Endothelial cell of umbilical vein (primary cell): ENCODE measurements at regions of chr11 and their contacts with region 1.

Region 1: GRCh38 chr11:17978553-17979287 is 34.1 kb downstream of the SERGEF start:
- DNase-seq: peak; percentile 41
- H3K4me3 ChIP-seq: no peak overlapping the region
- H3K27ac ChIP-seq: no peak overlapping the region
- H3K4me1 ChIP-seq: no peaks in the 10 kb centered on the region
- H3K27me3 ChIP-seq: no peaks in the 10 kb centered on the region
- CTCF ChIP-seq: peak; percentile 64 to 87
- POLR2A ChIP-seq: no peak

Region 2: GRCh38 chr11:17598700-17599459 is 379.8 kb before region 1 on chr11:
- CTCF ChIA-PET with region 1: interaction called, 58 read pairs
- POLR2A ChIA-PET with region 1: no interaction called
- dilution Hi-C with region 1: no loop called
- intact Hi-C with region 1: loop called (anchors 1 kb)
- DNase-seq: peak; percentile 61
- H3K4me3 ChIP-seq: no peak overlapping the region
- H3K27ac ChIP-seq: no peak overlapping the region
- H3K4me1 ChIP-seq: no peaks in the 10 kb centered on the region
- H3K27me3 ChIP-seq: no peaks in the 10 kb centered on the region
- CTCF ChIP-seq: peak; percentile 86 to 98
- POLR2A ChIP-seq: no peak

Region 3: GRCh38 chr11:17760102-17761029 is 218.4 kb before region 1 on chr11:
- CTCF ChIA-PET with region 1: interaction called, 74 read pairs
- POLR2A ChIA-PET with region 1: no interaction called
- dilution Hi-C with region 1: no loop called
- intact Hi-C with region 1: loop called (anchors 1 kb)
- DNase-seq: peak; percentile 49
- H3K4me3 ChIP-seq: no peak overlapping the region
- H3K27ac ChIP-seq: no peak overlapping the region
- H3K4me1 ChIP-seq: no peaks in the 10 kb centered on the region
- H3K27me3 ChIP-seq: no peaks in the 10 kb centered on the region
- CTCF ChIP-seq: peak; percentile 41 to 73
- POLR2A ChIP-seq: no peak

Region 4: GRCh38 chr11:17770048-17770652 is 208.6 kb before region 1 on chr11:
- CTCF ChIA-PET with region 1: interaction called, 16 read pairs
- POLR2A ChIA-PET with region 1: no interaction called
- dilution Hi-C with region 1: no loop called
- intact Hi-C with region 1: no loop called
- DNase-seq: no peak
- H3K4me3 ChIP-seq: no peak overlapping the region
- H3K27ac ChIP-seq: no peak overlapping the region
- H3K4me1 ChIP-seq: no peaks in the 10 kb centered on the region
- H3K27me3 ChIP-seq: no peaks in the 10 kb centered on the region
- CTCF ChIP-seq: no peak
- POLR2A ChIP-seq: no peak

Region 5: DNA sequence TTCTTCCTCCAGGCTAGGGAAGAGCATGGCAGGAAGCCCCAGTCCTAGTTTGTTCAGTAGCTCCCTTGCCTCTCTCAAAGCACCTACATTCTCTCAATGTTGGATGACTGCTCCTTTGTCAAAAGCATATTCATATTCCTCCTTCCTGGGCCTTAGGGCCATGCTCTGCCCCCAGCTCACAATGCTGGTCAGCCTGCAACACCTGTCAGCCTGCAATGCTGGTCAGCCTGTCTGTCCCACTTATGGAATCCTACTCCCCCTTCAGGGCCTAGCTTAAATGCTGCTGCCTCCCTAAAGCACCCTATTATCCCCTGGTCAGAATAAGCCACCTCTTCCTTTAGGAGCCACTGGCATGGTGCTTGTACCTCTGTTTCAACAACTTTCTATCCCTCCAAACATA is 11.1 kb before region 1 on chr11:
- CTCF ChIA-PET with region 1: interaction called, 15 read pairs
- POLR2A ChIA-PET with region 1: no interaction called
- dilution Hi-C with region 1: no loop called
- intact Hi-C with region 1: no loop called
- DNase-seq: no peak
- H3K4me3 ChIP-seq: no peak overlapping the region
- H3K27ac ChIP-seq: no peak overlapping the region
- H3K4me1 ChIP-seq: no peaks in the 10 kb centered on the region
- H3K27me3 ChIP-seq: no peaks in the 10 kb centered on the region
- CTCF ChIP-seq: no peak
- POLR2A ChIP-seq: no peak

Region 6: DNA sequence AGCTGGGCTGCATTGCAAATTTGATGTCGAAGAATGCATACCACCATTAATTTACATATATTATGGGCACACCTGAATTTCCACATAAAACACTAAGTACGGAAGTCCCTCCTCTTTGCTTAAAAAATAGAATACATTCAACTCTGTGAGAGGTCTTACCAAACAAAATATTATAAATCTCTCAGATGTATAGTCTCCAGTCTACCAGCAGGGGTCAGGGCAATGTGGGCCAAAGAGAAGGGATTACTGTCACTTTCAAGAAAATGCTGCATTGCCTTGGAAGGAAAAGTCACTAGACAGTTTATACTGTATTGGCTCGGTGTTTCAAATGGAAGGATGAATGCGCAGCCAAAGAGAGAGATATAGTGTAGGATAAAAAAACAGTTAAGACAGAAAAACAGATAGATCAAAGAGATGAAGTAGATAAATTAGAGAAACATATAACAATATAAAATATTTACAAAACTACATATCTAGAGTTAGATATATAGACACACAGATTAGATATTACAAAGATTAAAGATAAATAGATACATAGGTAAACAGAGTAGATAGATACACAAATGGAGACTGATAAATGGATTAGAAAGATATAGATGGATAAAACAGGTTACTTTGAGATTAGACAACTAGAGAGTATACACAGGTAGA is 13.2 kb after region 1 on chr11:
- CTCF ChIA-PET with region 1: interaction called, 20 read pairs
- POLR2A ChIA-PET with region 1: no interaction called
- dilution Hi-C with region 1: no loop called
- intact Hi-C with region 1: no loop called
- DNase-seq: peak; percentile 59
- H3K4me3 ChIP-seq: no peak overlapping the region
- H3K27ac ChIP-seq: no peak overlapping the region
- H3K4me1 ChIP-seq: no peaks in the 10 kb centered on the region
- H3K27me3 ChIP-seq: no peaks in the 10 kb centered on the region
- CTCF ChIP-seq: peak; percentile 68 to 70
- POLR2A ChIP-seq: no peak